PC-9 (cell line): ENCODE measurements at regions of chr9 and their contacts with region 1.

Region 1: GRCh38 chr9:121074635-121075385 is at the start of gene CNTRL:
- DNase-seq: peak; percentile 64 to 90
- H3K4me3 ChIP-seq: peak within 1 kb of the TSS; percentile 69
- H3K27ac ChIP-seq: peak within 1 kb of the TSS; percentile 26; the same call in 1 of the 2 replicates
- H3K4me1 ChIP-seq: peaks cover 15% of the 10 kb centered on the region; the same call in 1 of the 2 replicates
- H3K27me3 ChIP-seq: no peaks in the 10 kb centered on the region
- CTCF ChIP-seq: no peak
- total RNA-seq, gene CNTRL: 41.6 and 44.9 TPM in 2 replicates

Region 2: GRCh38 chr9:120625222-120625621 is 449.6 kb before region 1 on chr9:
- CTCF ChIA-PET with region 1: no interaction called
- POLR2A ChIA-PET with region 1: no interaction called
- intact Hi-C with region 1: no loop called
- DNase-seq: no peak
- H3K4me3 ChIP-seq: no peak overlapping the region
- H3K27ac ChIP-seq: no peak overlapping the region
- H3K4me1 ChIP-seq: peaks cover 15% of the 10 kb centered on the region
- H3K27me3 ChIP-seq: no peaks in the 10 kb centered on the region
- CTCF ChIP-seq: no peak

Region 3: DNA sequence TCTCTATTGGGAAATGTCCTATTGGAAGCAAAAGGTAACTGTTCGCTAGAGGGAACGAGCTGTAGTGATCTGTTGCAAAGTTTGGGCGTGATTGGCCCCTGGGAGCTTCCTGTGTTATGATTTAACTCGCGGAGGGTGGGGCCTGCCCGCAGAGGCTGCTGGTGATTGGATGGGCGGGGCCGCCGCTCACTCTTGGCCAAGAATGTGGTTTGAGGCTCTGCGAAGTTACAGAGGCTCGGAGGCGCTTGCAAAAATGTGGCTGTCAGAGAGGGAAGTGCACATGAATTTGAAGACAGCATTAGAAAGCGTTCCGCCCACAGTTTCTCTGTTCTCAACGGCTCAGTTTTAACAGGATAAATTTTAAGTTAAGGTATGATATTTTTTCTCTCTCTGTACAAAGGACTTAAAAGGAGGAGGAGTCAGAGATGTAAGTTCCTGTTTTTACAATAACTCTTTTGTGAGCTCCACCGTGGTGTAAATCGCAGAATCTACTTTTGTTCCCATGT is 46.8 kb after region 1 on chr9:
- CTCF ChIA-PET with region 1: no interaction called
- POLR2A ChIA-PET with region 1: interaction called, 6 read pairs
- intact Hi-C with region 1: loop called (anchors 2 kb)
- DNase-seq: peak; percentile 93 to 96
- H3K4me3 ChIP-seq: peak overlapping the region; percentile 59
- H3K27ac ChIP-seq: peak overlapping the region; percentile 31
- H3K4me1 ChIP-seq: peaks cover 19% of the 10 kb centered on the region; the same call in 1 of the 2 replicates
- H3K27me3 ChIP-seq: no peaks in the 10 kb centered on the region
- CTCF ChIP-seq: no peak; the same call in 1 of the 2 replicates

Region 4: GRCh38 chr9:121196389-121196788 is 121.6 kb after region 1 on chr9:
- CTCF ChIA-PET with region 1: interaction called, 6 read pairs
- POLR2A ChIA-PET with region 1: no interaction called
- intact Hi-C with region 1: loop called (anchors 5 kb)
- DNase-seq: no peak
- H3K4me3 ChIP-seq: no peak overlapping the region
- H3K27ac ChIP-seq: peak overlapping the region; percentile 4; the same call in 1 of the 2 replicates
- H3K4me1 ChIP-seq: peaks cover 50% of the 10 kb centered on the region
- H3K27me3 ChIP-seq: no peaks in the 10 kb centered on the region
- CTCF ChIP-seq: no peak